SK-N-SH (cell line): ENCODE measurements at regions of chr12 and their contacts with region 1.

Region 1: DNA sequence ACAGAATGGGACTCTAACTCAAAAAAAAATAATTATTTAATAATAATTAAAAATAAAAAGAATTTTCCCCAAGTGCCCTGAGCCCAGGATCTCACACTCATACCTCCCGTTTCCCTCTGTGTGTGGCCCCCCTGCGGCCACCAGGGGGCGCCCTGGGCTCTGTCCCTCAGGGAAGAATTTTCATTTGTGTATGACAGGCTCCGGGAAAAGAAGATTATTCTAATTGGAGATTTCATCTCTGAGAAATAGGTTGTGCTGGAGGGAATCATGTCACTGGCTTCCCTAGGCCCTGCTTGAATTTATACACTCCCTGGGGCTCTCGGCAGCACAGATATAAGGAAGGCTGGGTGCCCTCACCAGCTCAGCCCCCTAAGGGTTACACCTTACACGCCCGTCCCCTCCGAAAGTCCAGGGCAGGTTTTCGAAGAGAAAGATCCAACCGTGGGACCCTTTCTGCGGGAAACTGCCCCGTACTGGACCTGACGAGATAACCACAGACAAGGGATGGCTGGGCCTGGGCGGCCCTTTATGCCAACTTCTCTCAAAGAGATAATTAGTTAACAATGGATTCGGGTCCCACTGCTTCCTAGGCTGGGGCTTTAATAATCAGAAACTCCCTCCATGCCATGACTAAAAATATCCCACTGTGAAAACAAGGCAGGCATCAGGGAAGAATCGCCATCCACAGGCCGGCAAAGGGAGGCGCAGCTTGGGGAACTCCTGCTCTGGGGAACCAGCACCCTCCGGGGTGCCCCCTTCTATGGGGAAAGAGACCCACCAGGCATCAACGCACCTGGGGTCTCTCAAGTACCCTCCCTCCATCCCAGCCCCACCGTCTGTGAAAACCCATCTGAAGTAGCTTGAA is 80.7 kb downstream of the KDM2B start:
- DNase-seq: peak; percentile 90
- H3K4me3 ChIP-seq: peak overlapping the region in 1 of 2 experiments; percentile 54; a peak in 1 of 4 replicates
- H3K27ac ChIP-seq: peak overlapping the region; percentile 2 to 45; a peak in 1 of 4 replicates
- H3K4me1 ChIP-seq: peaks cover 4 to 5% of the 10 kb centered on the region in 2 experiments; a peak in 2 of 4 replicates
- H3K27me3 ChIP-seq: no peaks in the 10 kb centered on the region
- CTCF ChIP-seq: peak; percentile 93
- EP300 ChIP-seq: no peak
- RAD21 ChIP-seq: peak; percentile 70

Region 2: DNA sequence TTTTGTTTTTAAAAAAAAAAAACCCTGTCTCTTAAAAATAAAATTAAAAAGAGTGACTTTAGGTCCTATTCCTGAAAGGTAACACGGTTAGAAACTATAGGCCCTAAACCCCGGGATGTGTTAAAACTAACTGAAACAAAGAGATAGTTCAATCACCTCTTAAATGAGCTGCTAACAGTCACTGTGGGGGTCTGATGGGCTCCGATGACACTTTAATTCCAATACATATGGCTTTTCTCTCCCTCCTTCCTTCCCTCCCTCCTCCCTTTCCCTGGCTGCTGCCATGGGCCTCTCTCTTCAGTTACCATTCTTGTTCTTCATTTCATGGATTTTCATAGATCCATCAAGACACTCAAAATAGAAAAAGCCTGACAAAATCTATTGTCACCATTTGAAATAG is 23.7 kb before region 1 on chr12:
- CTCF ChIA-PET with region 1: interaction called, 26 read pairs
- POLR2A ChIA-PET with region 1: no interaction called
- DNase-seq: no peak
- H3K4me3 ChIP-seq: no peak overlapping the region
- H3K27ac ChIP-seq: no peak overlapping the region
- H3K4me1 ChIP-seq: peaks cover 0 to under 1% of the 10 kb centered on the region in 2 experiments; a peak in 1 of 4 replicates
- H3K27me3 ChIP-seq: no peaks in the 10 kb centered on the region
- CTCF ChIP-seq: no peak
- EP300 ChIP-seq: no peak
- RAD21 ChIP-seq: no peak

Region 3: DNA sequence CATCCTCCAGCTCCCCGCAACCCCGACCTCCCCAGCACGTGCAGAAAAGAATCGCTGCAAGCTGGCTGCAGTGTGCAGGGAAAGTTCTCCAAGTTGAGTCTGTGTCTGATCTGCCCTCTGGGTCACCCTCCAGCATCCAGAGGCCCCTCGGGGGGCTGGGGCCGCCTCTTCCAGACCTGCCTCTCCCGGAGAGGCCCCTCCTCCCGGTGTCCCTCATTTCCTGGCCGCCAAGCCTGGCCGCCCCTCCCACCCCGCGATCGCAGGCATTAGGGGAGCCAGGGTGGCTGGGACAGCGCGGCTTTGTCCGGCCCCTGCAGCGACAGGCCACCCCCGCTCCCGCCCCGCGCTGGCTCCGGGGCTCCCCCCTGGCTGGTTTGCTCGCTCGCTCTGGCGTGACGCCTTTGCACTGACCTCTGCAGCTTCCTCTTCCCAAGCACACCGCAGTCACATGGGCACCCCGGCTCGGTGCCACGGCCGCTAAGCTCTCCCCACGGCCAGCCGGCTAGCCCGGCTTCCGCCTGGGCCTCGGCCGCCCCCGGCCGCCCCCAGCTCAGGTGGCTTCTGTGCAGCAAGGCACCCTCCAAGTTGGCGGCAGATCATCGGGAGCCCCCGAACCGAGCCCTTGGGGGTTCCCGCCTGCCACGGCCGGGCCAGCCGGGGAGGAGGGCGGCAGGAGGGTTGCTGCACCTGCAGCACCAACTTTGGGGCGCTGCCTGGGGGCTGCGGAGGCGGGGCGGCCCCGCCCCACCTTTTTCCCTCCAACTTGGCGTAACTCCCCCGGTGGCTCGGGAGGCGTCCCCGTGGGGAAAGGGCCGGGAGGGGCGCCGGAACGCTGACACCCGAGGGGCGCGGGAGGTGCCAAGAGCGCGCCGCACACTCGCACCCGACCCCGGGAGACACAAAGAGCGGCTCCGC is 37.0 kb after region 1 on chr12:
- CTCF ChIA-PET with region 1: interaction called, 13 read pairs
- POLR2A ChIA-PET with region 1: no interaction called
- DNase-seq: peak; percentile 88
- H3K4me3 ChIP-seq: peak overlapping the region; percentile 50 to 54
- H3K27ac ChIP-seq: peak overlapping the region in 1 of 2 experiments; percentile 35; a peak in 2 of 4 replicates
- H3K4me1 ChIP-seq: peaks cover 4 to 16% of the 10 kb centered on the region in 2 experiments; a peak in 2 of 4 replicates
- H3K27me3 ChIP-seq: no peaks in the 10 kb centered on the region
- CTCF ChIP-seq: no peak
- EP300 ChIP-seq: no peak
- RAD21 ChIP-seq: no peak

Region 4: DNA sequence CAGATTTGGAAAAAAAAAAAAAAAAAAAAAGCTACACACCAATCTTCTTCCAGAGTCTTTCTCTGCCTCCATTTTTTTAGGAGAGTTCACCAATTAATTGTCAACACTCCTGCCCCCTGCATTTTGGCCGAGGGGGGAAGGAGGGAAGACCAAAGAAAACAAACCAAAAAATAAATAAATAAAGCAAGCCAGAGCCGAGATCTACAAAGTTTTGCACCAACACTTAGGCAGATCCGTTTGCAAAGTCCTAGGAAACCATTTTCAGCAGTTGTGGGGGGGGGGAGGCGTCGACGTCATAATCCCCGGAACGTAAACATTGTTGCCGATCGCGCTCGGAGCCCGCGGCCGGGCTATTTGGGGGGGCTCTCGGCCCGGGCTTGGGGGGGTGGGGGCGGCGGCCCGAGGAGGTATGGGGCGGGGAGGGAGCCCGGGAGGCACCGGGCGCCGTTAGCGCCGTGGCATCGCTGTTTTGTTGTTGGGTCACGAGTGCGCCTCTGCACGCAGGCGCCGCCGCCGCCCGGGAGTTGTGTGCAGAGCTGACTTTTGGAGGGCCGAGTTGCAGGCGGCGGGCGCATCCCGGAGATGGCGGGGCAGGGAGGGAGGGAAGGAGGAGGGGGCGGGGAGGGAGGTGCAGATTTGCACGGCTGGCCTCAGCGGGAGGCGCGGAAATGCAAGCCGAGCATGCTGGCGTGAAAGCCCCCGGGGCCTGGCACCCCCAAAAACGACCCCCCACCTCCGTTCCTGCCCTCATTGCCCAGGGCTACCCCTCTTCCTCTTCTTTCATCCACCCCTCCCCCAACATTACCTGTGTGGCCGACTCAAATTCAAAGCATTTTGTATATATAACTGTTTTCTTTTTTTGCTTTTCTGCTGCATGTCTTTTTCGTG is 80.1 kb after region 1 on chr12:
- CTCF ChIA-PET with region 1: no interaction called
- POLR2A ChIA-PET with region 1: no interaction called
- DNase-seq: peak; percentile 84
- H3K4me3 ChIP-seq: peak overlapping the region; percentile 64 to 87
- H3K27ac ChIP-seq: peak overlapping the region; percentile 90 to 98
- H3K4me1 ChIP-seq: peaks cover 25 to 32% of the 10 kb centered on the region in 2 experiments; a peak in 3 of 4 replicates
- H3K27me3 ChIP-seq: no peaks in the 10 kb centered on the region
- CTCF ChIP-seq: no peak
- EP300 ChIP-seq: no peak
- RAD21 ChIP-seq: no peak

Region 5: GRCh38 chr12:121678716-121679580 is 178.8 kb after region 1 on chr12:
- CTCF ChIA-PET with region 1: interaction called, 17 read pairs
- POLR2A ChIA-PET with region 1: no interaction called
- DNase-seq: no peak
- H3K4me3 ChIP-seq: no peak overlapping the region
- H3K27ac ChIP-seq: no peak overlapping the region
- H3K4me1 ChIP-seq: peaks cover 0 to 5% of the 10 kb centered on the region in 2 experiments; a peak in 1 of 4 replicates
- H3K27me3 ChIP-seq: no peaks in the 10 kb centered on the region
- CTCF ChIP-seq: no peak
- EP300 ChIP-seq: no peak
- RAD21 ChIP-seq: no peak